Activated B cell treated with CpG ODN at 0.5 μM for 24 hours (primary cell): ENCODE measurements at regions of chr15 and their contacts with region 1.

Region 1: GRCh38 chr15:29196290-29196689 is 73.3 kb downstream of the NSMCE3 start:
- DNase-seq: no peak
- ATAC-seq: no peak
- H3K4me3 Mint-ChIP-seq: no peak overlapping the region
- H3K27ac Mint-ChIP-seq: no peak overlapping the region
- H3K4me1 Mint-ChIP-seq: no peaks in the 10 kb centered on the region
- H3K27me3 Mint-ChIP-seq: peaks cover 2% of the 10 kb centered on the region
- CTCF ChIP-seq: no peak

Region 2: GRCh38 chr15:29259233-29259632 is 62.9 kb after region 1 on chr15:
- CTCF ChIA-PET with region 1: no interaction called
- POLR2A ChIA-PET with region 1: no interaction called
- intact Hi-C with region 1: loop called (anchors 10 kb)
- DNase-seq: no peak
- ATAC-seq: no peak
- H3K4me3 Mint-ChIP-seq: no peak overlapping the region
- H3K27ac Mint-ChIP-seq: no peak overlapping the region
- H3K4me1 Mint-ChIP-seq: no peaks in the 10 kb centered on the region
- H3K27me3 Mint-ChIP-seq: no peaks in the 10 kb centered on the region
- CTCF ChIP-seq: no peak